ENCODE measurements at regions of chr10 and their contacts with region 1.

Region 1: DNA sequence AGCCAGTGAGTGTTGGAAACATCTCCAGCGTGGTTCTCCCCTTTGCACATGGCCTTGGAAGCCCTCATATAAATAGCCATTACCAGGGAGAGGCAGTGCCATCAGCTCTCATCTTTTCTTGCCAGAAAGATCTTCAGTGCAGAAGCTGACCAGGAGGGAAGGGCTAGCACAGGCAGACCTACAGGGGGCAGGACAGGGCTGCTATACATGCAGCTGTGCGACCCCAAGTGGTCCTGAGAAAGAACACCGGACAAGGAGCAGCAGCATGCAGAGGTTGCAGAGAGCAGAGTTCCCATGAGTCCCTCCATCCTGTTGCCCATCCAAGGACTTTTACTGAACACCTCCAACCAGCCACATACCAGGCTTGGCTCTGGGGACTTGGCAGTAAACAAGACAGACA is 17.1 kb downstream of the GRID1 start:
- DNase-seq: peak; percentile 56 to 63
- H3K4me3 ChIP-seq: no peak overlapping the region
- H3K27ac ChIP-seq: no peak overlapping the region
- H3K4me1 ChIP-seq: peaks cover 0 to 2% (median 0%) of the 10 kb centered on the region in 4 experiments; a peak in 1 of 7 replicates
- H3K27me3 ChIP-seq: no peaks in the 10 kb centered on the region
- CTCF ChIP-seq: peak; percentile 99 to 100 (median 100)
- EP300 ChIP-seq: no peak
- POLR2A ChIP-seq: no peak
- RAD21 ChIP-seq: peak; percentile 81 to 87

Region 2: GRCh38 chr10:86261941-86262687 is 87.4 kb before region 1 on chr10:
- CTCF ChIA-PET with region 1: interaction called, 51 read pairs
- POLR2A ChIA-PET with region 1: no interaction called
- DNase-seq: peak; percentile 43 to 67
- H3K4me3 ChIP-seq: no peak overlapping the region
- H3K27ac ChIP-seq: no peak overlapping the region
- H3K4me1 ChIP-seq: peaks cover 0 to 12% (median 7%) of the 10 kb centered on the region in 4 experiments; a peak in 6 of 7 replicates
- H3K27me3 ChIP-seq: peaks cover 0 to 10% (median 4%) of the 10 kb centered on the region in 4 experiments; a peak in 5 of 7 replicates
- CTCF ChIP-seq: peak; percentile 74 to 83 (median 74)
- EP300 ChIP-seq: no peak
- POLR2A ChIP-seq: no peak
- RAD21 ChIP-seq: peak; percentile 75 to 80

Region 3: GRCh38 chr10:86291616-86292340 is 57.7 kb before region 1 on chr10:
- CTCF ChIA-PET with region 1: interaction called, 30 read pairs
- POLR2A ChIA-PET with region 1: no interaction called
- DNase-seq: peak in 1 of 2 experiments; percentile 68
- H3K4me3 ChIP-seq: no peak overlapping the region
- H3K27ac ChIP-seq: no peak overlapping the region
- H3K4me1 ChIP-seq: peaks cover 0 to 19% (median 15%) of the 10 kb centered on the region in 4 experiments; a peak in 6 of 7 replicates
- H3K27me3 ChIP-seq: peaks cover 0 to 4% (median 2%) of the 10 kb centered on the region in 4 experiments; a peak in 3 of 7 replicates
- CTCF ChIP-seq: peak; percentile 38 to 58 (median 45); a peak in 3 of 4 replicates
- EP300 ChIP-seq: no peak
- POLR2A ChIP-seq: no peak
- RAD21 ChIP-seq: peak; percentile 27 to 50

Region 4: DNA sequence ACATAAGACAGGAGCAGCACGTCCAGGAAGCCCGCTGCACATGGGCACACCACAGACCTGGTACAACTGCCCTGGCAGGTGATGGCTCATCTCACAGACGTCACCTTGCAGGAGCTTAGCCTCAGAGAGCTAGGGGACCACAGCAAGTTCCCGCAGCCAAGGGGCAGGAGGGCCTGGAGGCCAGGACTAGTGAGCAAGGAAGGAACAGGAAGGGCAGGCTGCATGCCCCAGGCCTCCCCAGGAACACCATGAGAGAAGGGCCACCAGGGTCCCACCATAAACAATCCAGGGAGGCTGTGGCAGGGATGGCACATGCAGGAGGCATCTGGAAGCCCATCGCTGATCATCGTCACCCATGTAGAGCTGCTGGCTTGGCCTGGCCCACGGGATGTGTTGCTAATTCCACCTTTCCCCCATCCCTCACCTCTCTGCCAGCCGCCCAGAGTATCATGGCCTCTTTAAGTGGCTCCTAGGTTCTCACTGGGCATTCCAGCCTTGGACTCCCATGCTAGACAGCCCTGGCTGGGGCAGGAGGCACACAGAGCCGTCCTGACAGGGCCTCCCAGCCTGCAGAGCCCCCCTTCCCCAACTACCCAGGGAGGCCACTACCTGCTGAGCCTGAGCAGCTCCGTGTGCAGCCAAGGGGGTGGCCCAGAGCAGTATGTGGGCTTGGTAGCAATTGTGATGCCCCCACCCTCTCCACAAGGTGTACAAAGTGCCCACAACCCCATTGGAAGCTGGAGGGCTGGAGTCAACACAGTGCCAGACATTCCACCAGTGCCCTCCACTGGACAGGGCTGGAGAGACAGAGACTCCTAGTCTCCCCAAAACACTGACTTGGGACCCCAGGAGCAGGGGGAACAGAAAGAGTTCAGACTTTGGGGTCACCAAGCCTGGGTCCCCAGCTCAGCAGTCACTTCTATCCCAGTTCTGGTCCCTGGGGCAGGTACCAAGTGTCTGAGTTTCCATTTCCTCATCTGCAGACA is 18.4 kb before region 1 on chr10:
- CTCF ChIA-PET with region 1: interaction called, 24 read pairs
- POLR2A ChIA-PET with region 1: no interaction called
- DNase-seq: no peak
- H3K4me3 ChIP-seq: no peak overlapping the region
- H3K27ac ChIP-seq: no peak overlapping the region
- H3K4me1 ChIP-seq: no peaks in the 10 kb centered on the region; a peak in 1 of 7 replicates
- H3K27me3 ChIP-seq: no peaks in the 10 kb centered on the region
- CTCF ChIP-seq: peak; percentile 43 to 52 (median 46); a peak in 3 of 4 replicates
- EP300 ChIP-seq: no peak
- POLR2A ChIP-seq: no peak
- RAD21 ChIP-seq: peak; percentile 59 to 75